Heart right ventricle (tissue), 16 donors: ENCODE measurements at regions of chr18 and their contacts with region 1.

Region 1: DNA sequence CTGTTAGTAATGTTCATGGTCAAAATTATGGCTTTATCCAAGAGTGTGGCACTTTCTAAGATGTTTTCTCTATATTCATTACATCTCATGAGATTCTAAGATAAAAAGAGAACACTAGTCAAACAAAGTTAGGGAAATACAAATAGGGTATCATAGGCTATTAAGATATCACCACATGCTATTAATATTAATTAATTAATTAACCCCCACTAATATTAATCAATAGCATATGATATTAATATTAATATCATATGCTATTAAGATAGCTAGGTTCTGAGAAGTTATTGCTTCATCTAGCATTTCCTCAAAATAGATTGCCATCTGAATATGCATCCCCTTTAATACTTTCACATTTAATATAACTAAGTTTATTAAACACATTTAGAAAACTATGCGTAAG is 22.1 kb downstream of the DSG3 start:
- DNase-seq: no peak
- ATAC-seq: no peak
- H3K4me3 ChIP-seq: no peak overlapping the region
- H3K27ac ChIP-seq: no peak overlapping the region
- H3K4me1 ChIP-seq: no peaks in the 10 kb centered on the region
- H3K27me3 ChIP-seq: no peaks in the 10 kb centered on the region
- CTCF ChIP-seq: no peak

Region 2: DNA sequence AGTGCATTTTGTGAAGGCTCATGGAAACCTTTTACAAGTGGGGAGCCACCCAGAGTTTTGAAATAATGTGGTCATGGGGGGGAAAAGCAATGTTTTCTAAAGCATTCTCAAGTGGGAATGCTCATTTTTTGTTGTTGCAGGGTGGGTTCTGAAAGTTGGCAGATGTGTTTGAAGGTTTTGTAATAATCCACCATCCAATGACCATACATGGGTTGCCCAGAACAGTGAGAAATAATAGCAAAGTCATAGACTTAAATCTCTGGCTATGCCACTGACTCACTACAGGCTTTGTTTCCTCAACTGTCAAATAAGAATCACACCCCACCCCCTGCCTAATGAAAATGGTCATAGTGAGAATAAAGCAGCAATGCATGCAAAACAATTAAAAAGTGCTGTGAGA is 19.2 kb before region 1 on chr18:
- intact Hi-C with region 1: loop called in 1 of 10 experiments (anchors 2 kb)
- DNase-seq: no peak
- ATAC-seq: no peak
- H3K4me3 ChIP-seq: no peak overlapping the region
- H3K27ac ChIP-seq: no peak overlapping the region
- H3K4me1 ChIP-seq: no peaks in the 10 kb centered on the region
- H3K27me3 ChIP-seq: no peaks in the 10 kb centered on the region
- CTCF ChIP-seq: no peak